Mammary epithelial cell (primary cell): ENCODE measurements at regions of chr2 and their contacts with region 1.

Region 1: DNA sequence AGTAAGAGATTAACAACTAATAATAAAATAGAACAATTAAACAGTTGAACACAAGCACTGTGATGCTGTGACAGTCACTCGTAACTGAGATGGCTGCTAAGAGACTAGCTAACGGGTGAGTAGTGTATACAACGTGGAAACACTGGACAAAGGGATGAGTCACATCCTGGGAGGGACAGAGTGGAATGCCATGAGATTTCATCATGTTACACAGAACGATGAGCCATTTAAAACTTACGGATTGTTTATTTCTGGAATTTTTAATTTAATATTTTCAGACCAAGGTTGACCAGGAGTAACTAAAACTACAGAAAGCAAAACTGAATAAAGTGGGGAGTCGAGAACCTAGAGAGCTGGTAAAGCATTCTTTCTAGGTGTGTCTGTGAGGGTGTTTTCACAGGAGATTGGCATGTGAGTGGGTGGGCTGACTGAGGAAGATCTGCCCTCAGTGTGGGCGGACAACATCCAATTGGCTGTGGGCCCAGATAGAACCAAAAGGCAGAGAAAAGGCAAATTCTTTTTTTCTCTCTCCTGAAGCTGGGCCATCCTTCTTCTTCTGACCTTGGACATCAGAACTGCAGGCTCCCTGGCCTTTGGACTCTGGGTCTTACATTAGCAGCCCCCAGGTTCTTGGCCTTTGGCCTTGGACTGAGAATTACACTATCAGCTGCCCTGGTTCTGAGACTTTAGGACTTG is 14.6 kb downstream of the TMSB10 start:
- DNase-seq: peak; percentile 96
- H3K4me3 ChIP-seq: peak overlapping the region; percentile 23 to 29 (median 23)
- H3K27ac ChIP-seq: peak overlapping the region; percentile 100
- H3K4me1 ChIP-seq: peaks cover 33% of the 10 kb centered on the region
- H3K27me3 ChIP-seq: no peaks in the 10 kb centered on the region
- CTCF ChIP-seq: no peak

Region 2: DNA sequence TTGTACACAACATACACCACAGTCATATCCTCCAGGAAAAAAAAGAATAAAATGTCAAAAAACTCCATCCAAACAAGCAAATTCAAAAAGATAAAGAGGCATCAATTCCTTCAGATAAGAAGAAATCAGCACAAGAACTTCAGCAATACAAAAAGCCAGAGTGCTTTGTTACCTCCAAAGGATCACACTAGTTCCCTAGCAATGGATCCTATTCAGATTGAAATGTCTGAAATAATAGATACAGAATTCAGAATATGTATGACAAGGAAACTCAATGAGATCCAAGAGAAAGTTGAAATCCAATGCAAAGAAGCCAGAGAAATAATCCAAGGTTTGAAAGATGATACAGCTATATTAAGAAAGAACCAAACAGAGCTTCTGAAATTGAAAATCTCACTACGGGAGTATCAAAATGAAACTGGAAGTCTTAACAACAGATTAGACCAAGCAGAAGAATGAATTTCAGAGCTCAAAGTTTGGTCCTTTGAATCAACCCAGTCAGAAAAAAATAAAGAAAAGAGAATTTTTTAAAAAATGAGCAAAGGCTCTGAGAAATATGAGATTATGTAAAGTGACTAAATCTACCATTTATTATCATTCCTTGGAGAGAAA is 119.7 kb before region 1 on chr2:
- CTCF ChIA-PET with region 1: no interaction called
- dilution Hi-C with region 1: no loop called
- in situ Hi-C with region 1: no loop called
- intact Hi-C with region 1: no loop called
- DNase-seq: no peak
- H3K4me3 ChIP-seq: no peak overlapping the region
- H3K27ac ChIP-seq: no peak overlapping the region
- H3K4me1 ChIP-seq: no peaks in the 10 kb centered on the region
- H3K27me3 ChIP-seq: no peaks in the 10 kb centered on the region
- CTCF ChIP-seq: no peak

Region 3: GRCh38 chr2:84905181-84906107 is 14.6 kb before region 1 on chr2 and contains the start of gene TMSB10:
- CTCF ChIA-PET with region 1: interaction called, 4 read pairs
- dilution Hi-C with region 1: no loop called
- in situ Hi-C with region 1: no loop called
- intact Hi-C with region 1: loop called (anchors 1 kb)
- DNase-seq: peak; percentile 85
- H3K4me3 ChIP-seq: peak within 1 kb of the TSS; percentile 82 to 94 (median 94)
- H3K27ac ChIP-seq: peak within 1 kb of the TSS; percentile 81
- H3K4me1 ChIP-seq: peaks cover 3% of the 10 kb centered on the region
- H3K27me3 ChIP-seq: no peaks in the 10 kb centered on the region
- CTCF ChIP-seq: peak in 1 of 2 donors; percentile 16
- total RNA-seq, gene TMSB10: 3,165 to 4,185 TPM